ENCODE measurements at regions of chr15 and their contacts with region 1.

Region 1: DNA sequence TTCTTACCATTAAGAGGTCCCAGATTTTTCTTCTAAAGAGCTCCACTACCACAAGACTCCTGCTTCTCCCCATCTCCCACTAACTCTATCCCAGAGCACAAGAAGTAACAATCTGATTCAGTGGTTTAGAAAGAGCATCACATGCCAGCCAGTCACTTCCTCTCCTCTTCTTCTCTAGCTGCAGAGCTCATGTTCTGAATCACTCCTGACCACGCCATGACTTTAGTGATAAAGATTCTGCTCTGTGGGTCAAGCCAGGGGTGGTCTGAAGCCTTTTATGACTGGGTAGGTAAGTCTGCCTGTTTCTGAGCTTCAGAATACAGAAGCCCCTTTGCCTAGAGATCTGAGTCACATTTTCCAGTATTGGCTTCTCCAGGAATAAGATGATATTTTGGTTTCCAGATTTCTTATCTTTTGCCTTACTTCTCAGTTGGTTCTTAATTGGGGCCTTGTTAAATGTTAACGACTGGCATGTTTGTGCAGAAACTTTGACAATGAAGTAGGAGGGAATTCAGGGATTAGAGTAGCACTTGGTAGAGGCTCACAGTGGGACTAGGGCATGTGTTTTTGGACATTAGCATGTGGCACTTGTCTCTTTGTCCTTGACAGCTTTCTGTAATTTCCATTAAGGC is 27.6 kb upstream of the ADAMTSL3 start:
- DNase-seq: no peak
- H3K4me3 ChIP-seq: no peak overlapping the region
- H3K27ac ChIP-seq: no peak overlapping the region
- H3K4me1 ChIP-seq: no peaks in the 10 kb centered on the region
- H3K27me3 ChIP-seq: no peaks in the 10 kb centered on the region
- CTCF ChIP-seq: no peak
- EP300 ChIP-seq: no peak
- POLR2A ChIP-seq: no peak

Region 2: DNA sequence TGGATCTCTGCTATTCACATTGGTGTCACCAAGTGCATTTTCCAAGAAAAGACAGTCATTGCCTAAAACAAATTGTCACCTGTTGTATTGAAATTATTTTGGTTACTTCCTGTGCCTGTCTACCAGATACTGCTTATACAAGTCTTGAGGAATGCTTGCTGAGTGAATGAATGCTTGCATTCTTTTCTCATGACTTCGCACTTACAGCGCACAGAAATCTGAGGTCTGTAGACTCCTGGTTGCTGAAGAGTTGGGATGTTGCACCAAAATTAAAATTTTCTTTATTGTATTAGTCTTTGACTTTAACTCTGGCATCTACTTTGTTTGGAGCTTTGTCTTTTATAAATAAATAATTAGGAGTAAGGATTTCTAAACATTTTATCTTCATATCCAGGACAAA is 150.7 kb before region 1 on chr15:
- in situ Hi-C with region 1: loop called in 1 of 4 experiments (anchors 25 kb)
- intact Hi-C with region 1: no loop called
- DNase-seq: no peak
- H3K4me3 ChIP-seq: no peak overlapping the region
- H3K27ac ChIP-seq: no peak overlapping the region
- H3K4me1 ChIP-seq: no peaks in the 10 kb centered on the region
- H3K27me3 ChIP-seq: no peaks in the 10 kb centered on the region
- CTCF ChIP-seq: no peak
- EP300 ChIP-seq: no peak
- POLR2A ChIP-seq: no peak

Measured in transverse colon (tissue), 4 donors.